HEK293 (cell line): ENCODE measurements at regions of chr6 and their contacts with region 1.

Region 1: GRCh38 chr6:43143235-43144124 is 27.6 kb upstream of the SRF start:
- H3K4me3 ChIP-seq: no peak overlapping the region
- H3K27ac ChIP-seq: no peak overlapping the region
- H3K4me1 ChIP-seq: no peaks in the 10 kb centered on the region
- CTCF ChIP-seq: peak; percentile 99

Region 2: GRCh38 chr6:42911171-42912021 is 232.1 kb before region 1 on chr6:
- CTCF ChIA-PET with region 1: interaction called, 11 read pairs
- POLR2A ChIA-PET with region 1: no interaction called
- H3K4me3 ChIP-seq: no peak overlapping the region
- H3K27ac ChIP-seq: no peak overlapping the region
- H3K4me1 ChIP-seq: no peaks in the 10 kb centered on the region
- CTCF ChIP-seq: no peak

Region 3: DNA sequence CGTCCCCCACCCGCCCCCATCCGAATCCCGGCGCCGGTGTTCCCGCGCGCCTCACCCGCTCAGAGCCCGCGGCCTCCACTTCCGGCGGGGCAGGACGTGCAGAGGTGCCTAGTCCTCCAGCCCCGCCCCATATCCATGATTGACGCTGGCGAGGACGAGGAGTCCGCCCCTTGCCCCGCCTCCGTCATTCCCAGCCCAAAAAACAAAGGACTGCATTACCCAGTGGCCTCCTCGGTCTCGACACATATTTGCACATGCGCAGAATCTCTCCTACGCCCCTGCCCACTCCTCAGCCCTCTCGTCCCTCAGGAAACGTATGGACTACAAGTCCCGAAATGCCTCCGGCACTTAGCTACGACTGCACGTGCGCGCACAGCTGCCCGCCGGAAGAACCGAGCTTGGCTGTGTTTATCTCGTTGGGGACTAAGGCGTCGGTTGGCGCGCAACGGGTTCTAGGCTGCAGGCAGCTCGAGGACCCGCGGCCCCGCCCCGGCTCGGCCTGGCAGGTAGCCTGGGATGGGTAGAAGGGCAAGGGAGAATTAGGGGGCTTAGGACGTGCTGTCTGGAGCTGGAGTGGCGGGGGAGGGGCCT is 129.5 kb before region 1 on chr6 and contains the starts of genes KLHDC3 and MEA1:
- CTCF ChIA-PET with region 1: interaction called, 30 read pairs
- POLR2A ChIA-PET with region 1: interaction called, 12 read pairs
- H3K4me3 ChIP-seq: peak within 1 kb of the TSS; percentile 70
- H3K27ac ChIP-seq: peak within 1 kb of the TSS; percentile 76
- H3K4me1 ChIP-seq: peaks cover 12% of the 10 kb centered on the region
- CTCF ChIP-seq: no peak

Region 4: GRCh38 chr6:43059168-43060033 is 84.1 kb before region 1 on chr6 and contains the starts of genes KLC4 and MRPL2:
- CTCF ChIA-PET with region 1: interaction called, 26 read pairs
- POLR2A ChIA-PET with region 1: interaction called, 7 read pairs
- H3K4me3 ChIP-seq: peak within 1 kb of the TSS; percentile 96
- H3K27ac ChIP-seq: peak within 1 kb of the TSS; percentile 76
- H3K4me1 ChIP-seq: peaks cover 9% of the 10 kb centered on the region
- CTCF ChIP-seq: no peak

Region 5: GRCh38 chr6:43081043-43081442 is 62.4 kb before region 1 on chr6:
- CTCF ChIA-PET with region 1: interaction called, 83 read pairs
- POLR2A ChIA-PET with region 1: interaction called, 18 read pairs
- H3K4me3 ChIP-seq: no peak overlapping the region
- H3K27ac ChIP-seq: no peak overlapping the region
- H3K4me1 ChIP-seq: peaks cover 14% of the 10 kb centered on the region
- CTCF ChIP-seq: no peak

Region 6: DNA sequence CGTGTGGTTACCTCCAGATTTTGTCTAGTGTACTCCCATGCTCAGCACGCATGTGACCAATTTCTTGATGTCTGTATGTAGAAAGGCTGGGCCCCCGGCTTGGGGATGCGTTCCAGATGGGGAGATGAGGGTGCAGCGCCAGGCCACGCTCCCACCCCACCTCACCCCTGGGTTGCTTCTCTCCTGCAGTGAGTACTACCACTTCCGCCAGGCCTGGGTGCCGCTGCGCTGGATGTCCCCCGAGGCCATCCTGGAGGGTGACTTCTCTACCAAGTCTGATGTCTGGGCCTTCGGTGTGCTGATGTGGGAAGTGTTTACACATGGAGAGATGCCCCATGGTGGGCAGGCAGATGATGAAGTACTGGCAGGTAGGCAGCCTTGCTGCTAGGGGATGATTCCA is 16.1 kb after region 1 on chr6:
- CTCF ChIA-PET with region 1: interaction called, 31 read pairs
- POLR2A ChIA-PET with region 1: interaction called, 3 read pairs
- H3K4me3 ChIP-seq: no peak overlapping the region
- H3K27ac ChIP-seq: no peak overlapping the region
- H3K4me1 ChIP-seq: no peaks in the 10 kb centered on the region
- CTCF ChIP-seq: no peak

Region 7: DNA sequence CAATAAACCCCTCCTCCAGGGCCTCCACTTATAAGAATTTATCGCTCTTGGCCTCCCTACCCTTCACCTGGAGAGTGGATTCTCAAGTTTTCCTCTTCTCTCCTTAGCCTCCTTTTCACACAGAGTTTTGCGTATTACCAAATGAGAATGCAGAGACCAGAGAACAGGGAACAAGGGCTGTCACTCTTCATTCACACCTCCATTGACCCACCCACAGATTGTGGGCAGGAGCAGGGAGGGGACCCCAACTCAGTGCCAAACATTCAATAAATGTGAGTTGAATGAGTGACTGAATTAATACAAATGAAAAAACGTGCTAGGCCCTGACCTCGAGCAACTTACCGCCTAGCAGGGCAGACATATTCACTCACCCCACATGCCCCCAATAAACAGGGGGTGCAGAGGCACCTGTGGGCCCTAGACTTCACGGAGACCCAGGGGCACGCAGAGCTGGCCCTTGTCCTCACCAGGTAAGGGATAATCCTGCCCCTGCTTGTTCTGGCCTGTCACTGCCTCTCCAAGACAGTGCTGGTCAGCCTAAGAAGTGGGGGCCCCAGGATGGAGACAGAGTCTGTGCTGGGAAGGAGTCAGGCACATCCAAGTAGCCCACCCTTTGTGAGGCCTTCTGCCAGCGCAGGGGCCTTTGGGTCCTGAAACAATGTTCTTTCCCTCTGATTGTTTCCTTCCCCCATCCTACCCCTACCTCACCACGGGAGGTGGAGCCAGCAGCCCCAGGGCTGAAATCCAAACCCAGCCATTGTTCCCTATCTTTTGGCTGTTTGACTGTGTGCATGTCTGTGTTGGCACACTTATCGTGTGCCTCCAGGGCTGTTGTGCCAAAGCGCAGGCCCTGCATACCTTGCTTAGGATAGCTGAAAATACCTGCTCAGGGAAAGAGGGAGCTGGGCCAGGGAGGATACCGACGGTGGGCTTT is 325.5 kb after region 1 on chr6:
- CTCF ChIA-PET with region 1: no interaction called
- POLR2A ChIA-PET with region 1: no interaction called
- H3K4me3 ChIP-seq: no peak overlapping the region
- H3K27ac ChIP-seq: no peak overlapping the region; the same call in 1 of the 2 replicates
- H3K4me1 ChIP-seq: peaks cover 5% of the 10 kb centered on the region; the same call in 1 of the 2 replicates
- CTCF ChIP-seq: no peak

Region 8: DNA sequence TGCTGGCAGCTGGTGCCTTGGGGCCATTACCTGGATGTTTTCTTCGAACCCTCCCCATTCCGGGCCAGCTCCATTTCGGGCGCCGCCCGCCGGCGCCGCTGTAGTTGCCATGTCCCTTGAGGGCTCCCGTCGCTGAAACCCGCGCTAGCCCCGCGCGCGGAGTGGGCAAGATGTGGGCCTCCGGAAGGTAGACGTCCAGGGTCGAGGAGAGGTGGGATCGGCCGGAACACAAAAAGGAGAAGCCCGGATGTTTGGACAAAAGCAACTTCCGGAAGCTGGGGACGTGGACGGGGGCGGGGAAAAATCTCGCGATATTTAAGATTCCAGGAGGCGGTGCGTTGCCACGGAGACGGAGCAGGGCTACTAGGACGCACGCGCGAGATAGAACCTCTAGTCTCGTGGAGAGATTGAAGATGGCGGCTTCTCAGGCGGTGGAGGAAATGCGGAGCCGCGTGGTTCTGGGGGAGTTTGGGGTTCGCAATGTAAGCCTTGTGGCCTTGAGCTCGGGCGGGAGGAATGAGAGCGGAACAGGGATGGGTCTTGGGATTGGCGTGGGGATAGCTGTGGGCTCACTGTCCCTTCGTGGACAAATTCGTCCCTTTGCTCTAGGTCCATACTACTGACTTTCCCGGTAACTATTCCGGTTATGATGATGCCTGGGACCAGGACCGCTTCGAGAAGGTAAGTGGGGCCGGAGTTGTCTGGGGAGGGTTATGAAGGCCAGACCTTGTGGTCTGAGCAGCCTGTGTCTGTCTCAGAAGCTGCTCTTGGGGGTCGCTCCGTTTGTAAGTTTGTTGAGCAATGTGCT is 373.4 kb after region 1 on chr6 and contains the starts of genes POLR1C and YIPF3:
- CTCF ChIA-PET with region 1: no interaction called
- POLR2A ChIA-PET with region 1: no interaction called
- H3K4me3 ChIP-seq: peak within 1 kb of the TSS; percentile 88
- H3K27ac ChIP-seq: peak within 1 kb of the TSS; percentile 57
- H3K4me1 ChIP-seq: peaks cover 9% of the 10 kb centered on the region; the same call in 1 of the 2 replicates
- CTCF ChIP-seq: no peak